Mammary epithelial cell (primary cell): ENCODE measurements at regions of chr18 and their contacts with region 1.

Region 1: GRCh38 chr18:37547196-37547827 is 18.3 kb downstream of the CELF4 start:
- DNase-seq: no peak
- H3K4me3 ChIP-seq: no peak overlapping the region
- H3K27ac ChIP-seq: no peak overlapping the region
- H3K4me1 ChIP-seq: no peaks in the 10 kb centered on the region
- H3K27me3 ChIP-seq: no peaks in the 10 kb centered on the region
- CTCF ChIP-seq: no peak

Region 2: DNA sequence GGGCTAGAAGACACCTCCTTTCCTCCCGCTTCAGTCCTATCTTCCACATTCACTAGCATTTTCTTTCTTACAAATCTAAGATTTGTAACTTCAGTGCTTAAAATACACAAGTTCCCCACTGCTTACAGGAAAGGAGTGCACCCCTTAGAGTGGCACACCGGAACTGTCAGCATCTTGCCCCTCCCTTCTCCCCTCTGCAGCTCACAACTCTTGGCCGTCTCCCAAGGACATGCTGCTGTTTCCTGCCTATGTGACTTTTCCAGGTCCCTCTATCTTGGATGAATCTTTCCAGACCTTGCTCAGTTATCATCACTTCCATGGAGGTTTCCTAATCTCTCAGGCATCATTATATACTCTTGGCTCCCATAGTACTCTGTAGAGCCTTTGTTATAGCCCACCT is 316.5 kb before region 1 on chr18:
- CTCF ChIA-PET with region 1: no interaction called
- dilution Hi-C with region 1: no loop called
- in situ Hi-C with region 1: no loop called
- intact Hi-C with region 1: no loop called
- DNase-seq: no peak
- H3K4me3 ChIP-seq: no peak overlapping the region
- H3K27ac ChIP-seq: no peak overlapping the region
- H3K4me1 ChIP-seq: no peaks in the 10 kb centered on the region
- H3K27me3 ChIP-seq: no peaks in the 10 kb centered on the region
- CTCF ChIP-seq: no peak

Region 3: DNA sequence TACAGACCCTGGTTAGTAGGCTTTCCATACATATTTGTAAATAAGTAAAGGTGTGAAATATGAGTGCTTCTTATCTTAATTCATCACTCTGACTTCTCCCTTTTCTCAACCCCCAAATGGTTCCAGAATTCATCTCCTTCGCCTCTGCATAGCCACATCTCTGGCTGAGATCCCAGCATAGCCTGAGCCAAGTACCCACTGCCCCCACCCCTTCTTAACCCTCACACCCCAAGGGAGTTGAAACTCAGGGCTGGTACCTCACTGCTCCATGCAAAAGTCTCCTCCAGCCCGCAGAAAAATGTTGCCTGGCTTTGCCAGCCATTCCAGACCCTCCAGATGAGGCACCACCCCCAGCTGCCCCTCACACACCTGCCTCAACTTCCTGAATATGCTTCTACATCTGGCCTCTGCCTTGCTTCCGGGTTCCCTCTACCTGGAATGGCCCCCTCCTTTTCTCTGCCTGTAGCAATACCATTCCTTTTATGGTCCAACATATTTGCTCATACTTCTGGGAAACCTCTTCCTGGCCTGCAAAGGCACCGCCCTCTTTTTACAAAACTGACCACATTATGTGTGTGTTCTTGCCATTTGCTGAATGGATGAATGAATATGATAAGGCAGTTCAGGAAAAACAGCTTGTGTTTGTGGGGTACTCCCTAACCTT is 94.5 kb before region 1 on chr18:
- CTCF ChIA-PET with region 1: no interaction called
- dilution Hi-C with region 1: no loop called
- in situ Hi-C with region 1: no loop called
- intact Hi-C with region 1: no loop called
- DNase-seq: peak; percentile 34
- H3K4me3 ChIP-seq: no peak overlapping the region
- H3K27ac ChIP-seq: no peak overlapping the region
- H3K4me1 ChIP-seq: no peaks in the 10 kb centered on the region
- H3K27me3 ChIP-seq: no peaks in the 10 kb centered on the region
- CTCF ChIP-seq: no peak

Region 4: GRCh38 chr18:37484983-37485834 is 62.1 kb before region 1 on chr18:
- CTCF ChIA-PET with region 1: no interaction called
- dilution Hi-C with region 1: loop called (anchors 5 kb)
- in situ Hi-C with region 1: no loop called
- intact Hi-C with region 1: no loop called
- DNase-seq: peak; percentile 29
- H3K4me3 ChIP-seq: no peak overlapping the region
- H3K27ac ChIP-seq: no peak overlapping the region
- H3K4me1 ChIP-seq: peaks cover 3% of the 10 kb centered on the region
- H3K27me3 ChIP-seq: peaks cover 11% of the 10 kb centered on the region
- CTCF ChIP-seq: peak in 1 of 2 donors; percentile 13